Aorta (tissue), 5 donors: ENCODE measurements at regions of chr2 and their contacts with region 1.

Region 1: GRCh38 chr2:177164584-177165052 is 48.0 kb upstream of the HNRNPA3 start:
- DNase-seq: peak; percentile 86 to 93
- ATAC-seq: peak; percentile 96
- H3K4me3 ChIP-seq: peak overlapping the region; percentile 22 to 71
- H3K27ac ChIP-seq: peak overlapping the region in 1 of 2 donors; percentile 93
- H3K4me1 ChIP-seq: peaks cover 0 to 5% of the 10 kb centered on the region in 2 donors
- H3K27me3 ChIP-seq: no peaks in the 10 kb centered on the region

Region 2: DNA sequence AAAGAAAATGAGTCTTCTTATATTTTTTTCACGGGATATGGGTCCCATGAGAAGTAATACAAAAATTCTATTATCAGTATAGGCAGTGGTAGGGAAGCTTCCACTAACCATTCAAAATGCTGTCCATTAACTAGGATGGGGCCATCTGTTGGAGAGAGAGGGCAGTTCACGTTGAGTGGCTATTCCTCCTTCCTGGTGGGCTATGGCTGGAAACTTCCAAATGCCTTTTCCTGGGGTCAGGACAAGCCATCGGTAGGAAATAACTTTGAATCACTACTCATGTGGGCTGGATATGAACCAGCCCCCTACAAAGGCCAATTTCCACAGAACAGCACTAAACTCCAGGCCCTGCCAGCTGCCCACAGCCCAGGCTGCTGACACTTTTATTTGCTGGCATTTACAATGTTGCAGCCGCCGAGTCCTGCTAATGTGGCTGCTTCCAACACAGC is 108.1 kb before region 1 on chr2:
- intact Hi-C with region 1: no loop called
- DNase-seq: no peak
- ATAC-seq: no peak
- H3K4me3 ChIP-seq: no peak overlapping the region
- H3K27ac ChIP-seq: no peak overlapping the region
- H3K4me1 ChIP-seq: no peaks in the 10 kb centered on the region
- H3K27me3 ChIP-seq: no peaks in the 10 kb centered on the region

Region 3: DNA sequence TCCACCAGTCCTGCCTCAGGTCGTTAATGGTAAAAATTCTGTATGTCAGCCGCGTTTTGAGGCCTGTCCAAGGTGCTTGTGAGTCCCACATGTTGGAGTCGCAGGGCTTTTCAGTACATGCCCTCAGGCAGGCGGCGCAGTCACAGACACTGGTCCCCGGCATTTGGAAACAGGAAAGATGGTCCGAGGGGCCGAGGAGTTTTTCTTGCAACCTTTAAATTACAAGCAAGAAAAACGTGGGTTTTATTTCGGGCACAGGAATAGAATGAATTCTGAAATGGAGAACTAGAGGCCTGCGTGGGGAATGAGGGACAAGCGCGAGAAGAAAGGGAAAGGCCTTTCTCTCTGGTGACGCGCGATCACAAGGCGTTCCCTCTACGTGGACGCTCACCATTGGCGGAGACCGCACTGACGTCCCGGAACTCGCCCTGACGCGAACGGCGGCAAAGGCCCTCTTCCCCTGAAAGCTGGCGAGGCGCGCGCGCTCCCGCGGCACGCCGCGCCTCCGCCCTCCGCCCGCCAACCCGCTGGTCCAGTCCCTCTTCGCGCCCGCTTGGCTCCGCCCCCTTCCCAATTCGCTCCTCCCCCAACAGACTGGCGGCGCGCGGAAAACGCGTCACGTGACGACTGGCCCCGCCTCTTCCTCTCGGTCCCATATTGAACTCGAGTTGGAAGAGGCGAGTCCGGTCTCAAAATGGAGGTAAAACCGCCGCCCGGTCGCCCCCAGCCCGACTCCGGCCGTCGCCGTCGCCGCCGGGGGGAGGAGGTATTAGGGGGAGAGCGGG is 47.7 kb after region 1 on chr2 and contains the start of gene HNRNPA3:
- intact Hi-C with region 1: loop called in 1 of 2 experiments (anchors 2 kb)
- DNase-seq: peak; percentile 100
- ATAC-seq: peak; percentile 99
- H3K4me3 ChIP-seq: peak within 1 kb of the TSS; percentile 79 to 82
- H3K27ac ChIP-seq: peak within 1 kb of the TSS; percentile 99
- H3K4me1 ChIP-seq: peaks cover 0 to 2% of the 10 kb centered on the region in 2 donors
- H3K27me3 ChIP-seq: no peaks in the 10 kb centered on the region
- total RNA-seq, gene HNRNPA3: 149 to 178 TPM

Region 4: GRCh38 chr2:177296040-177296439 is 131.4 kb after region 1 on chr2:
- intact Hi-C with region 1: loop called (anchors 2 to 10 kb)
- DNase-seq: no peak
- ATAC-seq: peak; percentile 56
- H3K4me3 ChIP-seq: peak overlapping the region in 1 of 2 donors; percentile 69
- H3K27ac ChIP-seq: no peak overlapping the region
- H3K4me1 ChIP-seq: no peaks in the 10 kb centered on the region
- H3K27me3 ChIP-seq: no peaks in the 10 kb centered on the region

Region 5: GRCh38 chr2:177392373-177393202 is 228.0 kb after region 1 on chr2 and contains the start of gene AGPS:
- intact Hi-C with region 1: loop called in 1 of 2 experiments (anchors 5 kb)
- DNase-seq: peak; percentile 87 to 94
- ATAC-seq: peak; percentile 92
- H3K4me3 ChIP-seq: peak within 1 kb of the TSS; percentile 56 to 81
- H3K27ac ChIP-seq: peak within 1 kb of the TSS in 1 of 2 donors; percentile 20
- H3K4me1 ChIP-seq: no peaks in the 10 kb centered on the region
- H3K27me3 ChIP-seq: no peaks in the 10 kb centered on the region
- total RNA-seq, gene AGPS: 25.1 to 35.8 TPM

Region 6: DNA sequence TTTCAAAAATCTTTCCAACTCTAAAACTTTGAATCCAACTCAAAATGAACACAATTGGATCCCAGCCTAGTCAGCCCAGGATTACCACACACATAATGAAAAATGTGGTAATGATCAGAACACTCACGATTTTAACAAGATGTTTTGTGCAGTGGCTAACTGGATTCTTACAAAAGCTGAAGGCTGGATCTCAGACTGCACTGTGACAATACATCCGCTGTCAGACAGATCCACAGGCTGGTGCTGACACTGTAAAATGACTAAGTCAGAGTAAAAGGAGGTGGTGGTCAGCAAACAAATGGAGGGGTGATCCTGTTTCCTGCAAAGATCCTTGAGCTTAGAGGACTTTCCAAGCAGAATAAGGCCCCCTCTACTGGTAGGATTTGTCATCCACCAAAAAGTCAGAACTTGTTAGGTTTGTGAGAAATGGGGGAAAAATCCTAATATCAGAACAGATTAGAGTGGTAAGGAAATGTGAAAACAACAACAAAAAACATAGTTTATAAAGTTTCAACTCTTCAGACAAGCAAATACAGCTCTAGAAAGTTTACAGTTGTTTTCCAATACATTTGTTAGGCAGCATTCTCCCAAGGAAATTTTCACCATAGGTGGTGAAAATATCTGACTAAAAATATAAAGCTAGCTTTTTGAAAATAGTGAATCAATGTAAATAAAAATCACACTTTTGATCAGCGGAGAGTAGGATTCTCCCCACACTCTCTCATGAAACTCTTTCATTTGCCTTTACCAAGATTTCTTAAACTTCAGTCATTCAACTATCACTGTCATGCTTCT is 439.9 kb after region 1 on chr2:
- intact Hi-C with region 1: loop called in 1 of 2 experiments (anchors 10 kb)
- DNase-seq: no peak
- ATAC-seq: peak; percentile 76
- H3K4me3 ChIP-seq: no peak overlapping the region
- H3K27ac ChIP-seq: no peak overlapping the region
- H3K4me1 ChIP-seq: no peaks in the 10 kb centered on the region
- H3K27me3 ChIP-seq: no peaks in the 10 kb centered on the region